Common myeloid progenitor, CD34-positive (primary cell): ENCODE measurements at regions of chr7 and their contacts with region 1.

Region 1: DNA sequence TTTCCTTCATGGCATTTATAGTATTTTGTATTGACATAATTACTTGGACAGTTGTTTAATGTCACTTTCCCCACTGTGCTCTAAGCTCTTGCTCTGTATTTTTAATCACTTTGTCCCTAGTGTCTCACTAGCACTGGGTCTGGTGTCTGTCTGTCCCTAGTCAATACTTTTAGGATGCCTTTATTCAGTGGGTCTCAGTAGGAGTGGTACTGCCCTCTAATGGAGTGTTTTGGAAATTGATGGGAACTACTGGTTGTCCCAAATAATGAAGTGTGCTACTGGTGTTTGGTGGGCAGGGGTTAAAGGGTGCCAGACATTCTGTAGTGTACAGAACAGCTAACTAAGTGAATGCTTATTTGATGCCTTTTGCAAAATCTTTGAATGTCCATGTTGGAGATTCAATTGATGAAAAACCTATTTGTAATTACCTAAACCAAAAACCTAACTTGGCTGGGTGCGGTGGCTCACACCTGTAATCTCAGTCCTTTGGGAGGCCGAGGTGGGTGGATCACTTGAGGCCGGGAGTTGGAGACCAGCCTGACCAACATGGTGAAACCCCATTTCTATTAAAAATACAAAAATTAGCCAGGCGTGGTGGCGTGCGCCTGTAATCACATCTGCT is 33.3 kb downstream of the CDK14 start:
- DNase-seq: peak; percentile 72 to 83 (median 79)
- H3K4me3 ChIP-seq: no peak overlapping the region
- H3K27ac ChIP-seq: no peak overlapping the region
- H3K4me1 ChIP-seq: no peaks in the 10 kb centered on the region
- H3K27me3 ChIP-seq: no peaks in the 10 kb centered on the region

Region 2: DNA sequence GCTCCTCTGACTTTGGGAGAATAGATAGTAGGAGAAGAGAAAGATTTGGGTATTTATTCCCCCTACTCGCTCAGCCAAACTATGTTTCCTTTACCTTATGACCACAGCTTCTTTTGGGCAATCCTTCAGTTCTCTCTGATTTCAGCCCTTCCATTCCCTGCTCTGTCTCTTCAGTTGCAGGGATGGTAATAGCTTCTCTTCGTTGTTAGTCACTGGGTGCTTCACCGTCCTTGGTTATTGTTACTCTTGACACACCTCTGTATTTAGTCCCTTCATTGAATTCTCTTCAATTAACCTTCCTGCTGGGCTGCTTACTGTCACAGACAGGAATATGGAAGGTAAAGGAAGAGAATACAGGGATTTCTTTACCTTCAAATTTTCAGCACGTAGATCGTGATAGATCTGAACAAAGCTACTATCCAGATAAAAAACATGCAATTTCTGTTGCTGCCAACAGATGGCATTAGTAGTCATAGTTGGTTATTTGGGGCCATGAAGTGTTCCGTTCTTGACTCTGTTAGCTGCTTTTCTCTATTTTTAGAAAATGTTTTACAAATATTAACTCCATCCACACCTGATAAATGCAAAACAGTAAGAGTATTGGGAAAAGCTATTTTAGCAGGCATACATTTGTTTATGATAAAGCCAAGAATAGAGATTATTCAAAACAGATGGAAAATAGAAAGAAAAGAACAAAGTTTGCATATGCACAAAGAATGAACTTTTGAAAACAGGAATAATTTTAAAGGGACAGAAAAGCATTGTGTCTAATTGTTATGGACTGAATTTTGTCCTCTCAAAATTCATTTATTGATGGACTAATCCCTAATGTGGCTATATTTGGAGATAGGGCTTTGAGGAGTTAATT is 174.0 kb before region 1 on chr7:
- CTCF ChIA-PET with region 1: interaction called, 10 read pairs
- POLR2A ChIA-PET with region 1: no interaction called
- DNase-seq: peak; percentile 35 to 61 (median 58)
- H3K4me3 ChIP-seq: peak overlapping the region in 2 of 7 experiments; percentile 17 to 28
- H3K27ac ChIP-seq: no peak overlapping the region
- H3K4me1 ChIP-seq: peaks cover 0 to 3% (median 0%) of the 10 kb centered on the region in 4 experiments
- H3K27me3 ChIP-seq: peaks cover 0 to 7% (median 0%) of the 10 kb centered on the region in 5 experiments

Region 3: DNA sequence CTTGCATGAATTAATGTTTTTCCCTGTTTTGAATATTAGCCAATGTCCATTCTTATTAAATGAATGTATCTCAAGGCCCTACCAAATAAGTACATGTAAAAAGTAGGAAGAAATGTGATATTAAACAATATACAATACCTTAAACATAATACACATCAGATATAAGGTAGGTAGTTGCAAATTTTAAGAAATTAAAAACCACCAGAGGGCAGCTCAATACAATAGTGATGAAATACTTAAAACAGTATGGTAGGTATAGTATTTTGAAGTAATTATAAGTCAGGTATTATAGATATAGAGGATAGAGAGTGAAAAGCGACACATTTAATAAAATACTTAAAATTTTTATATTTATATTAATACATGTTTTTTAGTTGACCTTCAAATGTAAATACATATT is 76.9 kb before region 1 on chr7:
- CTCF ChIA-PET with region 1: interaction called, 14 read pairs
- POLR2A ChIA-PET with region 1: no interaction called
- DNase-seq: peak; percentile 38 to 61 (median 54)
- H3K4me3 ChIP-seq: no peak overlapping the region
- H3K27ac ChIP-seq: no peak overlapping the region
- H3K4me1 ChIP-seq: no peaks in the 10 kb centered on the region
- H3K27me3 ChIP-seq: no peaks in the 10 kb centered on the region

Region 4: DNA sequence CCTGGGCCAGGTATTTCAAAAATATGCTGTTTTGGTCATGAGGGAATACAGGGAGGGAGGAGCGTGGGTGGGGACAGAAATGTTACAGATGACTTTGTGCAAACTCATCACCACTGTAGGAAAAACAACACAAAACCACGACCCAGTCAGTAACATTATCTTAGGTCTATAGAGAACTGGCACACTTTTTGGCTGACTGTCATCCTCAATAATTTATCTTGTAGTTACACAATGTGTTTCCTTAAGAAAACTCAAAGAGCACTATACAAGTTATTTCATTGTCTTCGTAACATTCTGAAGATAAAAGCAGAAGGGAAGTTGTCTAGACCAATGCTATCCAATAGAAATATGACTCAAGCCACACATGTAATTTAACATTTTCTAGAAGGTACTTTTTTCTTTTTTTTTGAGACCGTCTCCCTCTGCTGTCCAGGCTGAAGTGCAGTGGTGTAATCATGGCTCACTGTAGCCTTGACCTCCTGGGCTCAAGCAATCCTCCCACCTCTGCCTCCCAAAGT is 50.2 kb before region 1 on chr7:
- CTCF ChIA-PET with region 1: interaction called, 10 read pairs
- POLR2A ChIA-PET with region 1: no interaction called
- DNase-seq: peak; percentile 81 to 98 (median 94)
- H3K4me3 ChIP-seq: peak overlapping the region in 1 of 7 experiments; percentile 24
- H3K27ac ChIP-seq: peak overlapping the region in 1 of 2 experiments; percentile 34
- H3K4me1 ChIP-seq: peaks cover 4 to 15% (median 7%) of the 10 kb centered on the region in 4 experiments
- H3K27me3 ChIP-seq: no peaks in the 10 kb centered on the region

Region 5: GRCh38 chr7:90595801-90596671 is 33.4 kb before region 1 on chr7 and contains the start of gene CDK14:
- CTCF ChIA-PET with region 1: interaction called, 11 read pairs
- POLR2A ChIA-PET with region 1: interaction called, 4 read pairs
- DNase-seq: peak; percentile 89 to 97 (median 96)
- H3K4me3 ChIP-seq: peak within 1 kb of the TSS; percentile 75 to 93 (median 80)
- H3K27ac ChIP-seq: peak within 1 kb of the TSS; percentile 47 to 68
- H3K4me1 ChIP-seq: peaks cover 24 to 38% (median 31%) of the 10 kb centered on the region in 4 experiments
- H3K27me3 ChIP-seq: peaks cover 0 to 3% (median 0%) of the 10 kb centered on the region in 5 experiments

Region 6: GRCh38 chr7:90618876-90619275 is 10.5 kb before region 1 on chr7:
- CTCF ChIA-PET with region 1: interaction called, 25 read pairs
- POLR2A ChIA-PET with region 1: no interaction called
- DNase-seq: no peak
- H3K4me3 ChIP-seq: no peak overlapping the region
- H3K27ac ChIP-seq: no peak overlapping the region
- H3K4me1 ChIP-seq: no peaks in the 10 kb centered on the region
- H3K27me3 ChIP-seq: no peaks in the 10 kb centered on the region